CD4-positive, alpha-beta memory T cell (primary cell): ENCODE measurements at regions of chr1 and their contacts with region 1.

Region 1: GRCh38 chr1:58739856-58740466 is 40.1 kb upstream of the MYSM1 start:
- DNase-seq: peak; percentile 39 to 69 (median 58)
- H3K4me3 ChIP-seq: no peak overlapping the region
- H3K4me3 Mint-ChIP-seq: no peak overlapping the region
- H3K27ac ChIP-seq: no peak overlapping the region
- H3K27ac Mint-ChIP-seq: no peak overlapping the region
- H3K4me1 ChIP-seq: no peaks in the 10 kb centered on the region
- H3K4me1 Mint-ChIP-seq: peaks cover 0 to 5% (median 3%) of the 10 kb centered on the region in 4 donors
- H3K27me3 ChIP-seq: no peaks in the 10 kb centered on the region
- H3K27me3 Mint-ChIP-seq: no peaks in the 10 kb centered on the region

Region 2: DNA sequence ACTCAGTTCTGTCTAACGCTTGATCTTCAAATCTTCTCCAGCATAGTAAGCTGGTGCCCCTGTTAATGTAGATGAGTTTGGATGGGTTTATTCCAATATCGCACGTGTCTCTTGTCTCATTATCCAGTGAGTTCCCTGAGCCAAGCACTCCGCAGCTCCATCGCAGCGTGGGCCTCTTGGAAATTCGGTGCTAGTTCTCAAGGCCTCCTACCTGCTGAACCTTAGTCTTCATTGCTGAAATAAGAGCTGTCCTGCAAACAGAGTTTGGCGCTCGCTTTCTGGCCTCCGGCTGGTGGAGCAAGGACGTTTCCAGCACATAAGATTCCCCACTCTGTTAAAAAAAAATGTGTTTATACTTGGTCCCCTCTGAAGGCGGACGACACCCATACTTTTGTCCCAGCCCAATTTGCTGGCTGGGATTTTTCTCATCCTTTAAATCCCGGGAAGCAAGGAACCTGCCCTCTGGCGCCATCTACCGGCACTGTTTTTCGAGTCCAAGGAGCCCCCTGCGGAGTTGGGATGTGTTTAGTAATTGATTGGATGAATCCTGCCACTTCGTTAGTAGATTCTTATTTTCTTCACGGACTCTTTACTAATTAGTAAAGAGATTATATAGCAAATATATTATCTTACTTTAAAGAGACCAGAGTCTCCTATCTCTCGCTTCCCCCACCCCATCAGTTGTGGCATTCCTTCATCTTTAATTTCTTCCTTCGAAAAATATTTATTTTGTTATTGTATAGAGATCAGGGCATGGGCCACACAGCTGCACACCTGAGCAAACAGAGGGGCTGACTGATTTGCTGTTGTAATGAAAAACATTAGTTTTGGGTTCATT is 29.2 kb after region 1 on chr1:
- CTCF ChIA-PET with region 1: interaction called, 4 read pairs
- POLR2A ChIA-PET with region 1: no interaction called
- intact Hi-C with region 1: loop called (anchors 1 kb)
- DNase-seq: no peak
- H3K4me3 ChIP-seq: no peak overlapping the region
- H3K4me3 Mint-ChIP-seq: no peak overlapping the region
- H3K27ac ChIP-seq: no peak overlapping the region
- H3K27ac Mint-ChIP-seq: no peak overlapping the region
- H3K4me1 ChIP-seq: peaks cover 6% of the 10 kb centered on the region
- H3K4me1 Mint-ChIP-seq: peaks cover 0 to 11% (median 8%) of the 10 kb centered on the region in 4 donors
- H3K27me3 ChIP-seq: no peaks in the 10 kb centered on the region
- H3K27me3 Mint-ChIP-seq: peaks cover 1 to 2% of the 10 kb centered on the region in 2 donors

Region 3: DNA sequence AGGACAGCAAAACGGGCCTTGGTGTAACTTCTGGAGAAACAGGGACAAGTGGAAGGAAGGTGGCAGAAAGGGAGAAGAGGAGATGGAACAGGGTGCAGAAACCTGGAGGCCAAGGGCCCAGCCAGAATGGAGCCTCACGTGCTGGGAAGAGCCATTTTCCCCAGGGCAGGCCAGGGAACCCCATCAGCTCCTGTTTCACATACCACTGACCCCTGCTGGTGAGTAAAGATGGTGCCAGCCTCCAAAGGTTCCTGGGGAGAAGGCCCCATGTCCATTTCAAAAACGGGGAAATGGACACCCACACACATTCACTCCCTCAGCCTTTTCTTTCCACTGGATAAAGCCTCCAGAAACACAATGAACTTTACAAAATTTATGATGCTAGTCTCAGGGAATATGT is 101.5 kb after region 1 on chr1:
- CTCF ChIA-PET with region 1: interaction called, 4 read pairs
- POLR2A ChIA-PET with region 1: no interaction called
- intact Hi-C with region 1: loop called (anchors 1 kb)
- DNase-seq: peak in 3 of 5 donors; percentile 17 to 21 (median 17)
- H3K4me3 ChIP-seq: no peak overlapping the region
- H3K4me3 Mint-ChIP-seq: no peak overlapping the region
- H3K27ac ChIP-seq: no peak overlapping the region
- H3K27ac Mint-ChIP-seq: peak overlapping the region in 4 of 7 donors; percentile 17 to 71 (median 42)
- H3K4me1 ChIP-seq: no peaks in the 10 kb centered on the region
- H3K4me1 Mint-ChIP-seq: peaks cover 0 to 2% (median 0%) of the 10 kb centered on the region in 4 donors
- H3K27me3 ChIP-seq: no peaks in the 10 kb centered on the region
- H3K27me3 Mint-ChIP-seq: no peaks in the 10 kb centered on the region

Region 4: DNA sequence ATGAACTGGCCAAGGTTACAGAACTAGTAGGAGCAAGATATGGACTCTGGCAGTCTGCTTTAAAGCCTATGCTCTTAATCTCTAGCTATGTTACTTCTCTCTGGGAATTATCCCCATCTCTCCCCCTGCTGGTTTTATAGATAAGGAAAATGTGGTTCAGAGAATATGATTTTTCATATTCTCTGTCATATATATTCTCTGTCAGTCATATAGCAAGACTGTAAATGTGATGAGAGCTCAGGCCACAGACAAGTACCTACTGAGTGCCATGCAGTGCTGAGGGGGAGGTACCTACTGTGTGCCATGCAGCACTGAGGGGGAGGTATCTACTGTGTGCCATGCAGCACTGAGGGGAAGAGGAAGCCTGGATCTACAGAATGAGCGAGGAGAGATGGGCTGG is 336.7 kb after region 1 on chr1:
- CTCF ChIA-PET with region 1: no interaction called
- POLR2A ChIA-PET with region 1: no interaction called
- intact Hi-C with region 1: loop called (anchors 2 kb)
- DNase-seq: no peak
- H3K4me3 ChIP-seq: no peak overlapping the region
- H3K4me3 Mint-ChIP-seq: no peak overlapping the region
- H3K27ac ChIP-seq: no peak overlapping the region
- H3K27ac Mint-ChIP-seq: peak overlapping the region in 1 of 7 donors; percentile 43
- H3K4me1 ChIP-seq: peaks cover 12% of the 10 kb centered on the region
- H3K4me1 Mint-ChIP-seq: peaks cover 8 to 16% (median 12%) of the 10 kb centered on the region in 4 donors
- H3K27me3 ChIP-seq: no peaks in the 10 kb centered on the region
- H3K27me3 Mint-ChIP-seq: peaks cover 0 to 5% of the 10 kb centered on the region in 2 donors

Region 5: DNA sequence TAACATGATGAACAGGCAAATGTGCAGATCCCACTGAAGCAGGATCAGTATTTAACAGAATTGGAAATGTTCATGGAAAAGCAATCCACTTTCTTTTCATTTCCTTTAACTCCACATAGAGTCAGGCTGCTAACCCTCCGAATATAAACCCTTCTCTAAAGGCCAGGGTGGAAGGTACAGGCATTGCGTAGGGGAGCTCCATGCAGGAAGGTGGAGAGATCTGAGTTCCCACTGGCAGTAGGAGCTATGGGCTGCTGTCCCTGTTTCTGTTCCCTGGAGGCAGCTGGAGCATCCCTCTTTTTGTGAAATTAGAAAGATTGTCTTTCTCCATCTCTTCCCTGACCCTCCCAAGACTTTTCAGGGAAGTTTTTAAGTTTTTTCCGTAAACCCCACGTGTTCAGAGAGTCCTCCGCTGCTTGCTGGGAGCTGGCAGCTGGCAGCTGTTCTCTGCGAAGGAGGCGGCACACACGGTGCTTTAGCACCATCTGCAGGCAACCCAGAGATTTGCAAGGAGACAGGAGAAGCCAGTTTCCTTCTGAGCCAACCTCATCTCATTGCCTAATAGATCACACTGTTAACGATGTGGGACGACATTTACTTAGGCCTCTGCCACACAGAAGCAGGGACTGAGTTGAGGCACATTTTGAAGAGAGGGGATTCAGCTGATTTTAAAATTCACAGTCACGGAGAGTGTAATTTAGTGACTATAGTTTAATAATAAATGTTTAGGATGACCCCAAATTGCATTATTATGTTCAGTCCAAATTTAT is 1019.4 kb after region 1 on chr1:
- CTCF ChIA-PET with region 1: interaction called, 25 read pairs
- POLR2A ChIA-PET with region 1: no interaction called
- intact Hi-C with region 1: loop called (anchors 1 kb)
- DNase-seq: peak; percentile 58 to 67 (median 63)
- H3K4me3 ChIP-seq: no peak overlapping the region
- H3K4me3 Mint-ChIP-seq: peak overlapping the region in 3 of 8 donors; percentile 47 to 59 (median 59)
- H3K27ac ChIP-seq: no peak overlapping the region
- H3K27ac Mint-ChIP-seq: peak overlapping the region in 1 of 7 donors; percentile 53
- H3K4me1 ChIP-seq: peaks cover 3% of the 10 kb centered on the region
- H3K4me1 Mint-ChIP-seq: peaks cover 0 to 4% (median 3%) of the 10 kb centered on the region in 4 donors
- H3K27me3 ChIP-seq: no peaks in the 10 kb centered on the region
- H3K27me3 Mint-ChIP-seq: no peaks in the 10 kb centered on the region